ENCODE measurements at regions of chr17 and their contacts with region 1.

Region 1: DNA sequence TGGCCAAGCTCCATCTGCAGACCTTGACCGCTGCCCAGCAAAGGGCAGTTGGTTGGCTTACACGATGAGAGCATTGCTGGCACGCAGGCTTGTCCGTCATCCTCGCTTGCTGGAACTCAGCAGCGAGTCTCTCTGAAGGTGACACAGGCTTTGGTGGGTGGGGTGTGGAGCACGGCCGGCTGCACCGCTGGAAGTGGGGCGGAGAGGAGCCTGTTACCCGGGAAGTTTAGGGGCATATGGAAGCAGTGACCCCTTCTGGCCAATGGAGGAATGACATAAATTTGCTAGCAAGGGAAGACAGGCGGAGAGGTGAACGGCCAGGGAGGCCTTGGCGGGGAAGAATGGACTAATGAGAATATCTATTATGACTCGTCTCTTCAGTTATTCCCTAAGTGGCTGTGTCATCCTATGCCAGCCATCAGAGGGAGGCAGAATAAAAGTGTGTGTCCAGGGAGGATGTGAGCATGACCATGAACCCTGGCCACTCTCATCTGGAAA is 65.9 kb upstream of the SDK2 start:
- DNase-seq: peak; percentile 81
- H3K4me3 ChIP-seq: no peak overlapping the region; a peak in 1 of 4 replicates
- H3K27ac ChIP-seq: no peak overlapping the region
- H3K4me1 ChIP-seq: peaks cover 0 to 15% of the 10 kb centered on the region in 2 experiments; a peak in 2 of 4 replicates
- H3K27me3 ChIP-seq: no peaks in the 10 kb centered on the region
- CTCF ChIP-seq: peak; percentile 51
- EP300 ChIP-seq: no peak
- RAD21 ChIP-seq: peak; percentile 87

Region 2: DNA sequence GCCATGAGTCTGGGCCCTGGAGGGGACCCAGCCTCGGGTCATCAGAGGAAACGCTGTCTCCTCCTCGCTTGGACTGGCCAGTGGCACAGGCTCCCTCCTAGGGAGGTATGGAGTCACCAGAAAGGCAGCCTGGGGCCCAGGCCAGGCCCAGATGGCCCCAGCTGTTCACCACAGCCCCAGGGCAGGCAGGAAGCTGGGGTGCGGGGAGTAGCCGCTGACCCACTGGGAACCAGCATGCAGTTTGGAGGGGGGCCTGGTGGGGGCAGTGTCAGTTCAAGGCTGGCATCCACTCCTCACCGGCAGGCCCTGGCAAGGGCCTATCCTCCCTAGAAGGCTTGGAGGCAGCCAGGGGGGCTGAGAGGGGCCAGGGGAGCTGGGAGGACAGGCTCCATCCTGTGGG is 114.7 kb before region 1 on chr17:
- CTCF ChIA-PET with region 1: interaction called, 20 read pairs
- POLR2A ChIA-PET with region 1: no interaction called
- DNase-seq: peak; percentile 96
- H3K4me3 ChIP-seq: no peak overlapping the region
- H3K27ac ChIP-seq: no peak overlapping the region
- H3K4me1 ChIP-seq: peaks cover 0 to 36% of the 10 kb centered on the region in 2 experiments; a peak in 1 of 4 replicates
- H3K27me3 ChIP-seq: no peaks in the 10 kb centered on the region
- CTCF ChIP-seq: 0 out of 2 replicates have a peak, but pooled peaks have one; percentile 19
- EP300 ChIP-seq: peak in 1 of 2 experiments; percentile 81; a peak in 2 of 4 replicates
- RAD21 ChIP-seq: peak; percentile 82

Region 3: DNA sequence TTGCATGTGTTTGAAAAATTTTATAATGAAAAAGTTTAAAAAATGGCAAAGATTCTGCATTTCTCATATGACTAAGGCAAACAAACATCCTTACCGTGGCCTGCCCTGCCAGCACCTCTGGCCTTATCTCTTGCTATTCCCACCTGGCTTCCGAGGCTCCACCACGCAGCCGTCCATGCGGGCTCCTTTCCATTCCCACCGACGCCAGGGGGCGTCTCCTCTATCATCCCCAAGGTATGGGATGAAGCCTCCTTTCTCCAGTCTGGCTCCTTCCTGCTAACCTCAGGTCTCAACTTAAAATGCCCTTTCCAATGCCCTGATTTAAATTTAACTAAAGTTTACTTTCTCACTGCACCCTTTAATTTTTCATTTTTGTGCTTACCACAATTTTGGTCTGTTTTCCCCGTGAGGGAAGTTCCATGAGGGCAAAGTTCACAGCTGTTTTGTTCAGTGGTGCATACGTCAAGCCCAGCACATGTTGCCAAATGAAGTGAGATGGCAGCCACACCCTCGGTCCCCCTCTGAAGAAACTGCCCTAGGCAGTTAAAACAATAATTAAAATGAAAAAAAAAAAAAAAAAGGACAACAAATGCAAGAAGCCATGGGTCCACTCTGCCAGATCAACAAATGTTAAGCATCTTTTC is 52.5 kb before region 1 on chr17:
- CTCF ChIA-PET with region 1: interaction called, 35 read pairs
- POLR2A ChIA-PET with region 1: no interaction called
- DNase-seq: peak; percentile 70
- H3K4me3 ChIP-seq: no peak overlapping the region
- H3K27ac ChIP-seq: no peak overlapping the region
- H3K4me1 ChIP-seq: no peaks in the 10 kb centered on the region
- H3K27me3 ChIP-seq: no peaks in the 10 kb centered on the region
- CTCF ChIP-seq: peak; percentile 27
- EP300 ChIP-seq: no peak
- RAD21 ChIP-seq: peak; percentile 62

Region 4: GRCh38 chr17:73690676-73691075 is 19.5 kb before region 1 on chr17:
- CTCF ChIA-PET with region 1: interaction called, 19 read pairs
- POLR2A ChIA-PET with region 1: no interaction called
- DNase-seq: peak; percentile 47
- H3K4me3 ChIP-seq: no peak overlapping the region
- H3K27ac ChIP-seq: no peak overlapping the region
- H3K4me1 ChIP-seq: no peaks in the 10 kb centered on the region; a peak in 1 of 4 replicates
- H3K27me3 ChIP-seq: no peaks in the 10 kb centered on the region
- CTCF ChIP-seq: no peak
- EP300 ChIP-seq: no peak
- RAD21 ChIP-seq: no peak

Region 5: DNA sequence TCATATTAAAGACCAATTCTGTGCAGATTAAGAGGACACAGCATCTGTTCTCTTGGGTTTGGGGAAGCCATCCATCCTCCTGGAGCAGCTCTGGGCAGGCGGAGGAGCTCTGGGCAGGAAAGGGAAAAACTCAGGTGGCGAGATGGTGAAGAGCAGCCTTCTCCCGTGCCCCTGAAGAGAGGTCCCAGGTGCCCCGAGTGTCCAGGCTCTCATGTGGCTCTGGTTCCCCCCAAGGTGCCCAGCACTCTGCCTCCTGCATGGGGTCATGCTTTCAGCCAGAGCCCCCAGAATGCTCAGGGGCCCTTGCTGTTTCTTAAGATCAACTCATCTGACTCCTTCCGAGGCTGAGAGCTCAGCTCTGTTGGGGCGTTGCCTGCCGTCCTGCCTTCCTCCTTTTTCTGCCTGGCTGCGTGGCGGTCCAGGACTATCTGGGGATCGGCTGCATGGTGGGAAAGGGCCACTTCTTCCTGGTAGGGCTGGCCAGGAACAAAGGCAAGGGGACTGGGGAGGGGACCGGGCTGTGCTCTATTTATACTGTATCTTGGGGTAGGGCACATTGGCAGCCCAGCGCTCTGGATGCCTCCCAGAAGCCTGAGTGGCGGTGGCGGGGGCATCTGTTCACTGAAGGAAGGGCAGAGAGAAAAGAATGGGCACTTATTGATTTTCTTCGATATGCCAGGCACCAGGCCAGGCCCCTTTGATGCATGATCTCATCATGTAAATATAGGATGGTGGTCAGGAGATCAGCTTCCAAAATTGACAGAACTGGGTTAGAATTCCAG is 37.3 kb after region 1 on chr17:
- CTCF ChIA-PET with region 1: interaction called, 13 read pairs
- POLR2A ChIA-PET with region 1: no interaction called
- DNase-seq: no peak
- H3K4me3 ChIP-seq: no peak overlapping the region
- H3K27ac ChIP-seq: no peak overlapping the region
- H3K4me1 ChIP-seq: peaks cover 0 to 10% of the 10 kb centered on the region in 2 experiments; a peak in 1 of 4 replicates
- H3K27me3 ChIP-seq: no peaks in the 10 kb centered on the region
- CTCF ChIP-seq: no peak
- EP300 ChIP-seq: no peak
- RAD21 ChIP-seq: no peak

Measured in SK-N-SH (cell line).